ENCODE measurements at regions of chr1 and their contacts with region 1.

Region 1: DNA sequence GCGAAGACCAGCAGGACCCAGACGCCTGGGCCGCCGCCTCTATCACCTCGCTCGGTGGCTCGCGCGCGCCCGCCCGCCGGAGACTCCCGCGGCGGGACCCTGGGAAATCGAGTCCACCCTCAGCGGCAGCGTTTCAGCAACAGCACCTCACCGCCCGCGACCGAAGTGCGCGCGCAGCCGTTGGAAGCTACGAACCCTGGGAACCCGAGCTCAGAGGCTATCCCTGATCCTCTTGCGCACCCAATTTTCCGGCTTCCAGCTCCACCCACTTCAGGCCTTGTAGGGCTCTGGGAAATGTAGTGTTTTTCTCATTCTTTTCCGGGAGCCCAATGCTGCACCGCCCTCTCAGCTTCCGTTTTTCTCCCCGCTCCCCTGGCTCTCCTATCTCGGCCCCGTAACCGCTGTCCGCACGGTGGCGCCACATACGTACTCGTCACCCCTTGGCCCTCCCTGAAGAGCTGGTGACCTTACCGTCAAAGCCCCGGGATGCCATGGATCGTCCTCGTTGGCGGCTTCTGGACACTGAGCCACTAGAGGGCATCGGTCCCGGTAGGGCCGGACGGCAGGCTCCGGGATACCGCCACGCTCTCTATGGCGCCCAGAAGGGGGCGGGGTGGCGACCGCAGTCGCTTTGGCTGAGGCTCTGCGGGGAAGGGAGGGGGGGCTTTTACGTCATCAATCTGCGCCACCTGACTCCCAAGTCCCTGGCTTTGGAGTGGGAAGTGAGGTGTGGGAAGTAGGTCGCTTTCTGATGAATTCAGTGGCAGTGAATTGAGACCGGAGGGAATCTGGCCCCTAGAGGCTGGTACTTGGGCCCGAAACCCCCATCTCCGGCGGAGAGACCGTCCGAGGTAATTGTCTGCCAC is at the starts of genes ODR4 and TPR:
- DNase-seq: peak; percentile 92
- H3K4me3 ChIP-seq: peak within 1 kb of the TSS; percentile 90 to 100
- H3K27ac ChIP-seq: peak within 1 kb of the TSS; percentile 98
- H3K4me1 ChIP-seq: peaks cover 14 to 23% of the 10 kb centered on the region in 2 experiments; a peak in 3 of 4 replicates
- H3K27me3 ChIP-seq: no peaks in the 10 kb centered on the region
- CTCF ChIP-seq: peak; percentile 99
- EP300 ChIP-seq: no peak; a peak in 1 of 4 replicates
- RAD21 ChIP-seq: peak; percentile 37; the same call in 1 of the 2 replicates
- polyA plus RNA-seq, gene ODR4: 8.2 and 12.2 TPM in 2 replicates
- polyA plus RNA-seq, gene TPR: 37.5 and 46.9 TPM in 2 replicates

Region 2: GRCh38 chr1:186094170-186094569 is 281.2 kb before region 1 on chr1:
- CTCF ChIA-PET with region 1: no interaction called
- POLR2A ChIA-PET with region 1: no interaction called
- DNase-seq: no peak
- H3K4me3 ChIP-seq: no peak overlapping the region
- H3K27ac ChIP-seq: peak overlapping the region; percentile 22 to 31; a peak in 3 of 4 replicates
- H3K4me1 ChIP-seq: peaks cover 0 to 16% of the 10 kb centered on the region in 2 experiments; a peak in 2 of 4 replicates
- H3K27me3 ChIP-seq: no peaks in the 10 kb centered on the region
- CTCF ChIP-seq: no peak
- EP300 ChIP-seq: no peak
- RAD21 ChIP-seq: no peak

Region 3: GRCh38 chr1:186315570-186315969 is 59.8 kb before region 1 on chr1:
- CTCF ChIA-PET with region 1: interaction called, 10 read pairs
- POLR2A ChIA-PET with region 1: no interaction called
- DNase-seq: no peak
- H3K4me3 ChIP-seq: no peak overlapping the region
- H3K27ac ChIP-seq: no peak overlapping the region
- H3K4me1 ChIP-seq: no peaks in the 10 kb centered on the region
- H3K27me3 ChIP-seq: no peaks in the 10 kb centered on the region
- CTCF ChIP-seq: no peak
- EP300 ChIP-seq: no peak
- RAD21 ChIP-seq: no peak

Region 4: GRCh38 chr1:186363891-186364290 is 11.4 kb before region 1 on chr1:
- CTCF ChIA-PET with region 1: interaction called, 31 read pairs
- POLR2A ChIA-PET with region 1: no interaction called
- DNase-seq: no peak
- H3K4me3 ChIP-seq: no peak overlapping the region
- H3K27ac ChIP-seq: no peak overlapping the region
- H3K4me1 ChIP-seq: no peaks in the 10 kb centered on the region
- H3K27me3 ChIP-seq: no peaks in the 10 kb centered on the region
- CTCF ChIP-seq: no peak
- EP300 ChIP-seq: no peak
- RAD21 ChIP-seq: no peak

Region 5: DNA sequence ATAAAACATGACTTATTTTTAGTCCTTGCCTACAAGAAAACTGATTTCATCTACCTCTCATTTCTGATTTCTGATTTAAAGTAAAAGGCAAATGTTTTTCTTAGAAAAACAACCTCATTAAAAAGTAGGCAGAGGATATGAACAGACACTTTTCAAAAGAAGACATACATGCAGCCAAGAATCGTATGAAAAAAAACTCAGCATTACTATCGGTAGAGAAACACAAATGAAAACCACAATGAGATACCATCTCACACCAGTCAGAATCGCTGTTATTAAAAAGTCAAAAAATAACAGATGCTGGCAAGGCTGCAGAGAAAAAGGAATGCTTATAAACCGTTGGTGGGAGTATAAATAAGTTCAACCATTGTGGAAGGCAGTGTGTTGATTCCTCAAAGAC is 16.5 kb after region 1 on chr1:
- CTCF ChIA-PET with region 1: interaction called, 48 read pairs
- POLR2A ChIA-PET with region 1: interaction called, 5 read pairs
- DNase-seq: no peak
- H3K4me3 ChIP-seq: no peak overlapping the region
- H3K27ac ChIP-seq: no peak overlapping the region
- H3K4me1 ChIP-seq: no peaks in the 10 kb centered on the region
- H3K27me3 ChIP-seq: no peaks in the 10 kb centered on the region
- CTCF ChIP-seq: no peak
- EP300 ChIP-seq: no peak
- RAD21 ChIP-seq: no peak

Region 6: GRCh38 chr1:186404454-186405051 is 29.2 kb after region 1 on chr1:
- CTCF ChIA-PET with region 1: interaction called, 24 read pairs
- POLR2A ChIA-PET with region 1: no interaction called
- DNase-seq: peak; percentile 32
- H3K4me3 ChIP-seq: no peak overlapping the region; a peak in 1 of 4 replicates
- H3K27ac ChIP-seq: no peak overlapping the region
- H3K4me1 ChIP-seq: peaks cover 0 to 4% of the 10 kb centered on the region in 2 experiments; a peak in 2 of 4 replicates
- H3K27me3 ChIP-seq: no peaks in the 10 kb centered on the region
- CTCF ChIP-seq: peak; percentile 84
- EP300 ChIP-seq: no peak
- RAD21 ChIP-seq: peak; percentile 68

Region 7: DNA sequence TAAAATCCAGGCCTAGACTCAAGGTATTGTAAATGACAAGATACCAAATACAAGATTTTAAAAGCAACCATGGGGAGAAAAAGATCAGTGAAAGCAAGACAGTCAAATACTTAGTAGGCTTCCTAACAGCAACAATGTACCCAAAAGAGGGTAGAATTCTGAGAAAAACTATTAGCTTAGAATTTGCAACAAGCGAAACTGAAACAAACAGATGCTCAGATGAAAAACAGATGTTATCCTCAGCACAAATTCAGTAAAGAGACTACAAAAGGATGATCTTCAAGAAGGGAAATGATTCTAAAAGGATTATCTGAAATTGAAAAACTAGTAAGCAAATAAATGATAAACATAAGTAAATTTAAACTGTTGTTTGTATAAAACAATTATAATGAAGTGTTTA is 45.6 kb after region 1 on chr1:
- CTCF ChIA-PET with region 1: interaction called, 13 read pairs
- POLR2A ChIA-PET with region 1: no interaction called
- DNase-seq: no peak
- H3K4me3 ChIP-seq: no peak overlapping the region
- H3K27ac ChIP-seq: peak overlapping the region; percentile 6 to 58; a peak in 2 of 4 replicates
- H3K4me1 ChIP-seq: peaks cover 0 to 4% of the 10 kb centered on the region in 2 experiments; a peak in 3 of 4 replicates
- H3K27me3 ChIP-seq: no peaks in the 10 kb centered on the region
- CTCF ChIP-seq: no peak
- EP300 ChIP-seq: no peak
- RAD21 ChIP-seq: no peak

Region 8: DNA sequence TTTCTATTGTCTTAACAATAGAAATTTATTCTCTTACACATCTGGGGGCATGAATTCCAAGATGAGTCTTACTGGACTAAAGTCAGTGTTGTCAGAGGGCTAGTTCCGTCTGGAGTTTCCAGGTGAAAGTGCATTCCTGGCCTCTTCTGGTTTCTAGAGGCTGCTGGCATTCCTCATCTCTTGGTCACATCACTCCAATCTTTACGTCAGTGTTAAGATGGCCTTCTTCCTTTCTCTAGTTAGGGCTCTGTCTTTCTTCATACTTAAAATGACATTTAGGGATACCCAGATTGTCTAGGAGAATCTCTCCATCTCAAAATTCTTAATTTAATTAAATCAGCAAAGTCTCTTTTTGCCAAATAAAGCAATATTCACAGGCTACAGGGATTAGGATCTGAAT is 98.9 kb after region 1 on chr1:
- CTCF ChIA-PET with region 1: no interaction called
- POLR2A ChIA-PET with region 1: no interaction called
- DNase-seq: no peak
- H3K4me3 ChIP-seq: no peak overlapping the region
- H3K27ac ChIP-seq: peak overlapping the region in 1 of 2 experiments; percentile 14; a peak in 2 of 4 replicates
- H3K4me1 ChIP-seq: peaks cover 0 to 8% of the 10 kb centered on the region in 2 experiments; a peak in 3 of 4 replicates
- H3K27me3 ChIP-seq: no peaks in the 10 kb centered on the region
- CTCF ChIP-seq: no peak
- EP300 ChIP-seq: peak in 1 of 2 experiments; percentile 18; a peak in 1 of 4 replicates
- RAD21 ChIP-seq: no peak

Measured in SK-N-SH (cell line).